Right cardiac atrium (tissue), 5 donors: ENCODE measurements at regions of chr16 and their contacts with region 1.

Region 1: DNA sequence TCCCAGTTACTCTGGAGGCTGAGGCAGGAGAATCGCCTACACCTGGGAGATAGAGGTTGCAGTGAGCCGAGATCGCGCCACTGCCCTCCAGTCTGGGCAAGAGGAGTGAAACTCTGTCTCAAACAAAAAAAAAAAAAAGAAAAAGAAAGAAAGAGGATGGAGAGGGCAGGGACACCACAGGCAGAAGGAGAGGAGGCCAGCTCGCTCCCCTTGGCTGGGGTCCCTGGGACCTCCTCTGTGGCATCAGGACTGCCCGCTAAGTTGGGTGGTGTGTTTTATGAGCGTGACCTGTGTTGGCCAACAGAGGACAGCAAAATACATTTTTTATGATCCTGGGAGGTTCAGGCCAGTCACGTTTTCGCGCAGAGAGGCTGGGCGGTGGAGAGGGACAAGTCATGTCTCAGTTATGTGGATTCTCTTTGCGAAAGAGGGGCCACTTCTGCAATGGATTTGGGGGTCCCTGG is 229.6 kb downstream of the MRTFB start:
- DNase-seq: peak; percentile 76 to 86 (median 84)
- ATAC-seq: peak; percentile 83 to 86
- H3K4me3 ChIP-seq: peak overlapping the region; percentile 98
- H3K27ac ChIP-seq: no peak overlapping the region
- H3K4me1 ChIP-seq: no peaks in the 10 kb centered on the region
- H3K27me3 ChIP-seq: no peaks in the 10 kb centered on the region

Region 2: DNA sequence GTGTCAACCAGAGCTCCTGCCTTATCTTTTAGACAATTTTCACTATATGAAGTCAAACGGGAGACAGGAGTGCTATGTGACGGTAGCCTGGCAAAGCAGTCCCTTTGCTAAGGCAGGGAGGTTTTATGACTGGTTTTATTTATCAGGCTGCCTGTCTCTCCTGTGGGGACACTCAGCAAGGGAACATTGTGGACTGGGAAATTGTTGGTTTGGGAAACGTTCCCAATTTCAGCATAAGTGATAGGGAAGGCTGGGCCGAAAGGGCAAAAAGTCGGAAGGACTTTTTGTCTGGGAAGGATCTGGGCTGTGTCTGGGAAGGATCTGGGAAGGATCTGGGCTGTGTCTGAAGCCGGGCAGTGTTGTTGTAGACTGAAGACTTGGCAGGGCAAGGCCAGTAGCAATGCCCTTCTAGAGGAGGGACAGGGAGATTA is 118.1 kb after region 1 on chr16:
- intact Hi-C with region 1: loop called in 1 of 4 experiments (anchors 10 kb)
- DNase-seq: peak; percentile 54 to 82 (median 68)
- ATAC-seq: peak; percentile 92 to 93
- H3K4me3 ChIP-seq: peak overlapping the region; percentile 26
- H3K27ac ChIP-seq: peak overlapping the region; percentile 92
- H3K4me1 ChIP-seq: peaks cover 19% of the 10 kb centered on the region
- H3K27me3 ChIP-seq: no peaks in the 10 kb centered on the region

Region 3: GRCh38 chr16:14486520-14487303 is 186.0 kb after region 1 on chr16:
- intact Hi-C with region 1: loop called in 1 of 4 experiments (anchors 5 kb)
- DNase-seq: peak; percentile 84 to 93 (median 87)
- ATAC-seq: peak; percentile 91 to 93
- H3K4me3 ChIP-seq: peak overlapping the region; percentile 55
- H3K27ac ChIP-seq: peak overlapping the region; percentile 6
- H3K4me1 ChIP-seq: peaks cover 3% of the 10 kb centered on the region
- H3K27me3 ChIP-seq: no peaks in the 10 kb centered on the region

Region 4: DNA sequence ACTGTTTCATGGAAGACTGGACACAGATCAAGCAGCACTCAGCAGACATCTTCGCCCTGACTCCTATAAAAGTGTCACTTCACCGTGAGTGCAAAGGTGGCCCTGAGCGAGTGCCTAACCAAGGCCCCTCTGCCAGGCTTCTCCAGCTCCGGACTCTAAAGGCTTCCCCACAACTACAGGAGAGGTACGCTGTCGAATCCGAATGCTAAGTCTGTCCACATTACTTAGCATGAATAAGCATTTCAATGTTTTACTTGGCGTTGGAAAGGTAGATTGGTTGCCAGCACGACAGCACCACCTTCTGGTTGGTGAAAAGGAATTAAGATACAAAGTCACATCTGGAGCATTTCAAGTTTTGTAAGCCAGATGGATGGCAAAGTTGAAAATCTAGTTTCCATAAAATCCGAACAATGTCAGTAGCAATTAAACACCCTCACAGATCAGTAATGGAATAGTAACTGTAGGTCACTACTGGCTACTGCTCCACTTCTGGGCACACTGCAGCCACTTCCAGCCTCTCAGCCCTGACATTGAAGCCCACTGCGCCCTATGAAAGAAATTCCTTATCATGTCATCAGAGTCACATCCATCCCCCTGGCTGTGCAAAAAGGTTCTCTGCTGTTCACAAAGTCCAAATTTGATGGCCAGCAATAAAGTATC is 228.4 kb after region 1 on chr16:
- intact Hi-C with region 1: loop called (anchors 2 to 5 kb)
- DNase-seq: peak; percentile 65 to 83 (median 71)
- ATAC-seq: peak; percentile 87 to 88
- H3K4me3 ChIP-seq: peak overlapping the region; percentile 39
- H3K27ac ChIP-seq: peak overlapping the region; percentile 73
- H3K4me1 ChIP-seq: peaks cover 3% of the 10 kb centered on the region
- H3K27me3 ChIP-seq: no peaks in the 10 kb centered on the region

Region 5: DNA sequence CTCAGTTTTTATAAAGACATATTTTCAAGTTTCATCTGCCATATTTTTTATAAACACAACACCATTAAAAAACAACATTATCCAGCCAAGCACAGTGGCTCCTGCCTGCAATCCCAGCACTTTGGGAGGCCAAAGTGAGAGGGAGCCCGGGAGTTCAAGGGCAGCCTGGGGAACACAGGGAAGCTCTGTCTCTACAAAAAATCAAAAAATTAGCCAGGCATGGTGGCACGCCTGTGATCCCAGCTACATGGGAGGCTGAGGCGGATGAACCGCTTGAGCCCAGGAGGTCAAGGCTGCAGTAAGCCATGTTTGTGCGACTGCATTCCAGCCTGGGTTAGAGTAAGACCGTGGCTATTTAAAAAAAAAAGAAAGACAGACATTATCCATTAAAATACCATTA is 772.4 kb after region 1 on chr16:
- intact Hi-C with region 1: no loop called
- DNase-seq: no peak
- ATAC-seq: no peak
- H3K4me3 ChIP-seq: no peak overlapping the region
- H3K27ac ChIP-seq: no peak overlapping the region
- H3K4me1 ChIP-seq: no peaks in the 10 kb centered on the region
- H3K27me3 ChIP-seq: no peaks in the 10 kb centered on the region